Esophagus squamous epithelium (tissue), 5 donors: ENCODE measurements at regions of chr12 and their contacts with region 1.

Region 1: GRCh38 chr12:131132118-131132892 is 178.6 kb downstream of the ADGRD1 start:
- DNase-seq: no peak
- H3K4me3 ChIP-seq: no peak overlapping the region
- H3K27ac ChIP-seq: no peak overlapping the region
- H3K4me1 ChIP-seq: peaks cover 7 to 15% (median 8%) of the 10 kb centered on the region in 3 donors
- H3K27me3 ChIP-seq: peaks cover 0 to 10% (median 0%) of the 10 kb centered on the region in 4 donors
- CTCF ChIP-seq: peak; percentile 52 to 76 (median 72)
- POLR2A ChIP-seq: no peak

Region 2: GRCh38 chr12:130537052-130537451 is 595.3 kb before region 1 on chr12:
- intact Hi-C with region 1: no loop called
- DNase-seq: no peak
- H3K4me3 ChIP-seq: no peak overlapping the region
- H3K27ac ChIP-seq: no peak overlapping the region
- H3K4me1 ChIP-seq: no peaks in the 10 kb centered on the region
- H3K27me3 ChIP-seq: no peaks in the 10 kb centered on the region
- CTCF ChIP-seq: no peak
- POLR2A ChIP-seq: no peak

Region 3: DNA sequence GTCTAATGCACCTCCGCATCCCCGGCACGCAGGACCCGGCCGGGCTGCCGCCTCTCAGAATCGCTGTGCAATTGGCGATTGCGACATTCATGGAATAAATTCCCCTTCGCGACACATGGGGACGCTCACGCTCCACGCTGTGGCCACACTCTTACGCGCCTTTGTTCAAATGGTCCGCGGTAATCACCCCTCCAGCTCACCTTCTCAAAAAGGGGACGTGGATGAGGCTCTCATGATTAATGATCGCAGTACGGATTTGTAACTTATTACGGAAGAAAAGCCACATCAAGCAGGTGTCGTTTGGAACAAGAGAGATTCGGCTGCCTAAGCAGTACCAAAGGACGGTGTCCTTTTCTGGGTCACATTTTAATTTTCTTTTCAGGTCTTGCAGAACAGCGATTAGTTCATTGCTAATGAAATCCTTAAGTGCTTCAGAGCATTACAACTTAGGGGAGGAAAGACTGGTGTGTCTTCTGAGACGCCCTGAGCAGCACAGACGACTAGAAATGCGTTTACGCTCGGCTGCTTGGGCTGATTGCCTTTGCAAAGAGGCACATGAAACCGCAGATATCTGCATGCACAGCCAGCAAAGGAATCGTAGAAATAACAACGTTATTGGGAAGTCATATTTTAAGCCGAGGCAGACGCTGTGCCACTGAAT is 215.9 kb before region 1 on chr12:
- intact Hi-C with region 1: loop called (anchors 5 kb)
- DNase-seq: no peak
- H3K4me3 ChIP-seq: peak overlapping the region in 1 of 4 donors; percentile 44
- H3K27ac ChIP-seq: no peak overlapping the region
- H3K4me1 ChIP-seq: peaks cover 0 to 17% (median 3%) of the 10 kb centered on the region in 3 donors
- H3K27me3 ChIP-seq: peaks cover 0 to 44% (median 2%) of the 10 kb centered on the region in 4 donors
- CTCF ChIP-seq: peak; percentile 65 to 89 (median 82)
- POLR2A ChIP-seq: no peak

Region 4: DNA sequence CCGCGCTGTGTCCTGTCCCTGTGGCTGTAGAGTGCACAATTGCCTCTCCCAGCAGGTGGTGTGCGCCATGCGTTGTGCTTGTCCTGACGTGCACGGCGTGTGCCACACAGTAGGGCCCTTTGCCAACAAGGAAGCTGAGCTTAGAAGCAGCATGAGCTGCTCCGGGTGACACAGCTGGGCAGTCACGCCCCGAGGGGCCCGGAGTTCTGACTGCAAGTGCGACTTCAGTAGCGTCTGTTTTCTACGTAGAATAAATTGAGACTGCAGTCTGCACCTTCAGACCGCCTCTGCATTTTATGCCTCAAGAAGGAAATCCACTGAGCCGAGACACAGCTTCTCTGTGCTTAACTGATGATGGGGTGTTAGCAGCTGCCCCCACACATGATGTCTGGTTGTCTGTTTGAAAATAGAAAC is 97.0 kb before region 1 on chr12:
- intact Hi-C with region 1: no loop called
- DNase-seq: no peak
- H3K4me3 ChIP-seq: no peak overlapping the region
- H3K27ac ChIP-seq: no peak overlapping the region
- H3K4me1 ChIP-seq: peaks cover 0 to 20% (median 5%) of the 10 kb centered on the region in 3 donors
- H3K27me3 ChIP-seq: peaks cover 0 to 68% (median 0%) of the 10 kb centered on the region in 4 donors
- CTCF ChIP-seq: no peak
- POLR2A ChIP-seq: no peak